BJ (cell line): ENCODE measurements at regions of chr7 and their contacts with region 1.

Region 1: GRCh38 chr7:26365077-26365900 is 73.6 kb downstream of the SNX10 start:
- DNase-seq: peak; percentile 13
- H3K4me3 ChIP-seq: no peak overlapping the region
- H3K27me3 ChIP-seq: 0 out of 2 replicates have a peak, but pooled peaks cover under 1% of the 10 kb centered on the region
- CTCF ChIP-seq: peak; percentile 71

Region 2: GRCh38 chr7:25886387-25887240 is 478.7 kb before region 1 on chr7:
- CTCF ChIA-PET with region 1: interaction called, 145 read pairs
- POLR2A ChIA-PET with region 1: no interaction called
- DNase-seq: no peak
- H3K4me3 ChIP-seq: no peak overlapping the region
- H3K27me3 ChIP-seq: peaks cover 17% of the 10 kb centered on the region
- CTCF ChIP-seq: no peak

Region 3: GRCh38 chr7:26083113-26083512 is 282.2 kb before region 1 on chr7:
- CTCF ChIA-PET with region 1: interaction called, 88 read pairs
- POLR2A ChIA-PET with region 1: no interaction called
- DNase-seq: no peak
- H3K4me3 ChIP-seq: no peak overlapping the region
- H3K27me3 ChIP-seq: peaks cover 7% of the 10 kb centered on the region
- CTCF ChIP-seq: no peak

Region 4: GRCh38 chr7:26340476-26341018 is 24.7 kb before region 1 on chr7:
- CTCF ChIA-PET with region 1: no interaction called
- POLR2A ChIA-PET with region 1: no interaction called
- DNase-seq: no peak
- H3K4me3 ChIP-seq: no peak overlapping the region
- H3K27me3 ChIP-seq: no peaks in the 10 kb centered on the region
- CTCF ChIP-seq: no peak

Region 5: DNA sequence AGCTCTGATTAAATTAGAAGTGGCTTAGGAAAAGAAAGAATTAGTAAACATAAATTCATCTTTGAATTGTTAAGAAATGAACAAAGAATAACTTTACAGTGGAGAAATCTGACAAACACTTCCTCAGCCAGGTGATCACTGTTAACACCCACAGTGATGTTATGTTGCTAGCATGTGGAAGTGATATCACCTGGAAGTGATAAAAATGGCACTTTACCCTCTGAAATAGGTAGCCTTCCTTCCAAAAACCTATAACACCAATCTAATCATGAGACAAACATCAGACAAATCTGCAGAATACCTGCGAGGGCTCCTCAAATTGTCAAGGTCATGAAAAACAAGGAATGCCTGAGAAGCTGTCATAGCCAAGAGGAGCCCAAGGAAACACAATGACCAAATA is 14.1 kb before region 1 on chr7:
- CTCF ChIA-PET with region 1: interaction called, 20 read pairs
- POLR2A ChIA-PET with region 1: no interaction called
- DNase-seq: no peak
- H3K4me3 ChIP-seq: no peak overlapping the region
- H3K27me3 ChIP-seq: no peaks in the 10 kb centered on the region
- CTCF ChIP-seq: no peak

Region 6: DNA sequence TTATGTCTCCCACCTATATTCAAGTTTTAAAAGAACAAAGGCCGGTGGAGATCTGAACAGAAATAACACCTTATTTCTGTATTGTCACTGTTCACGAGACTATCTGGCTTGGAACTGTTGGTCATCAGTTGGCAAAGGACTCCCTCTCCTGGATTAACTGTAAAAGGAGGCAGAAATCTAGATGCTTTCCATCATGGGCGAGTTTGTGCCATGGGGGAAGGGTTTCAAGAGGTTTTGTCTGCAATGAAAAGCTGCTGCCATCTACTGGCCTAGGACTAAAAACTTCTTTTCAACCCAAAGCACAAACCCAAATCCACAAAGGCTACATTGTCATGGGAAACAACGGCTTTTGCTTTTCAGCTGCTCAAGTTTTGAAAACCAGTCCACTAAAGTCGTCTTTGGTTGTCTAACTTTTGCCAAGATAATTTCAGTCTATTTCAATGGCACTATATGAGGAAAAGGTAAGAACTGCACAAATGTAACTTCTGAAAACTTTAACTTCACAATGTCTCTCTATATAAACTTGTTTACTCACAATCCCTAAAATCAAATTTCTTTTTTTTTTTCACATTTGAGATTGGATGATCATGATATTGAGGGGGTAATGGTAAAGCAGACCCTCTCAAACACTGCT is 302.3 kb after region 1 on chr7:
- CTCF ChIA-PET with region 1: interaction called, 55 read pairs
- POLR2A ChIA-PET with region 1: no interaction called
- DNase-seq: peak; percentile 66
- H3K4me3 ChIP-seq: no peak overlapping the region
- H3K27me3 ChIP-seq: no peaks in the 10 kb centered on the region
- CTCF ChIP-seq: peak; percentile 86

Region 7: DNA sequence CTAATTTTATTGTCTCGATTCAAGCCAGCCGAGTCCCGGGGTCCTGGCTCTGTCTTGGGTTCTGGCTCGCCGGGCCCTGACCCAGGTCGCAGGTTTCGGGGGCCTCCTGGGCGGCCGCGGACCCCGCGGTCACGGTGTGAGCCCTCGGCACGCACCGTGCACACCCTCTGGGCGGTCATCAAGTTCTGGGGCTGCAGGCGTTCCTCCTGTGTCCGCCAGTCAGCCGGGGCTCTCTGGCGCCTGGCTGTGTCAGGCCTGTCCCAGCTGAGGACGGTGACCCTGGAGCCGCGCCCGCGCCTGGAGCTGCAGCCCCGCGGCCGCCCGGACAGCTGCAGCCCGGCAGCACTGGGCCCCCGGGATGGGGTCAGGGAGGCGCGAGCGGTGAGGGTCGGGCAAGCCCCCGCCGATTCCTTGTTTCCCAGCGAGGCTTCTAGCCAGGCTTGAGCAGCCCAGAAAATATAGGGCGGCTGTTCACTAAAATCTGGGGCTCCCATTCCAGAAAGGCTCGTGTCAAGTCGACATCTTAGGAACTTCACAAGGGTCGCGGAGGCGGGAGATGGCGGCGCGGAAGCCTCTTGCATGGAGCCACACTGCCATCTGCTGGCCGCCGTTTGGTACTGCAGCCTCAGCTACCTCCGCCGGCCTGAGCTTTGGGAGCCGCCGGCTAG is 795.4 kb after region 1 on chr7:
- CTCF ChIA-PET with region 1: interaction called, 33 read pairs
- POLR2A ChIA-PET with region 1: no interaction called
- DNase-seq: no peak
- H3K4me3 ChIP-seq: peak overlapping the region; percentile 72
- H3K27me3 ChIP-seq: no peaks in the 10 kb centered on the region
- CTCF ChIP-seq: peak; percentile 98